K562 (cell line): ENCODE measurements at regions of chr2 and their contacts with region 1.

Region 1: DNA sequence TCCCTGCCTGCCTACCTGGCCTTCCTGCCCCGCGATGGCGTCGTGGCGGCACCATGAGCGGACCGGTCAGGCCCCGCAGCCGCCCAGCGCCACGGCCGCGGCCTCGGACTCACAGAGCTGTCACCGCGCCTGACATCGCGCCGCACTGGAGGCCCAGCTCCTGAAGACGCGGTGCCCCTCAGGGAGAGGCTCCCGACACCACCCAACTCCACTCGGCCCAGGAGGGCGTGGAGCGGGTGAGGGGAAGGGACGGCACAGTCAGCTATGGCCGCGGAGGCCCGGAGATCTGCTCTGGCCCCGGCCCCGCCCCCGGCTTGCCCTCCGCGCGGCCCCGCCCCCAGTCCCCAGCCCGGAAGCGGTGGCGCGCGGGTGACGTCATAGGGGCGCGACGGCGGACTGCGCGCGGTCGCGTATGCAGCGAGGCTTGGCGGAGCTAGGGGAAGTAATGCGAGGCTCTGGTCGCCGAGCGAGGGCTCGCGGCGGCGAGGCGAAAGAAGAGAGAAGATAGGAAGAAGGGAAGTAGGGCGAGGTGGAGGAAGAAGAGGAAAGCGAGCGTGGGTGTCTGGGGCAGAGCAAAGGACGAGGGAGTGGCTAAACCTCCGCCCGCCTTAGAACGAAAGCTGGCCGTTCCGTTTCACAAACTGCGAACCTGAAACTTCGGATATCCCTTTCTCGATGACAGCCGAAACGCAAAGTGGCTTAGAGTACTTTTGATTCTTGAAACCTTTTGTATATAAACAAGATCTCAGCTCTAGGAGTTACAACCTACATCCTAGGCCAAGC is at the start of gene SLC35F5:
- DNase-seq: peak; percentile 91 to 95 (median 94)
- ATAC-seq: peak; percentile 98
- H3K4me3 ChIP-seq: peak within 1 kb of the TSS; percentile 96
- H3K27ac ChIP-seq: peak within 1 kb of the TSS; percentile 97
- H3K4me1 ChIP-seq: peaks cover 3 to 18% of the 10 kb centered on the region in 2 experiments; a peak in 2 of 5 replicates
- H3K27me3 ChIP-seq: no peaks in the 10 kb centered on the region
- CTCF ChIP-seq: no peak
- EP300 ChIP-seq: no peak
- POLR2A ChIP-seq: peak; percentile 98
- RAD21 ChIP-seq: no peak; a peak in 2 of 4 replicates
- polyA plus RNA-seq, gene SLC35F5: 4.9 to 7.4 TPM

Region 2: DNA sequence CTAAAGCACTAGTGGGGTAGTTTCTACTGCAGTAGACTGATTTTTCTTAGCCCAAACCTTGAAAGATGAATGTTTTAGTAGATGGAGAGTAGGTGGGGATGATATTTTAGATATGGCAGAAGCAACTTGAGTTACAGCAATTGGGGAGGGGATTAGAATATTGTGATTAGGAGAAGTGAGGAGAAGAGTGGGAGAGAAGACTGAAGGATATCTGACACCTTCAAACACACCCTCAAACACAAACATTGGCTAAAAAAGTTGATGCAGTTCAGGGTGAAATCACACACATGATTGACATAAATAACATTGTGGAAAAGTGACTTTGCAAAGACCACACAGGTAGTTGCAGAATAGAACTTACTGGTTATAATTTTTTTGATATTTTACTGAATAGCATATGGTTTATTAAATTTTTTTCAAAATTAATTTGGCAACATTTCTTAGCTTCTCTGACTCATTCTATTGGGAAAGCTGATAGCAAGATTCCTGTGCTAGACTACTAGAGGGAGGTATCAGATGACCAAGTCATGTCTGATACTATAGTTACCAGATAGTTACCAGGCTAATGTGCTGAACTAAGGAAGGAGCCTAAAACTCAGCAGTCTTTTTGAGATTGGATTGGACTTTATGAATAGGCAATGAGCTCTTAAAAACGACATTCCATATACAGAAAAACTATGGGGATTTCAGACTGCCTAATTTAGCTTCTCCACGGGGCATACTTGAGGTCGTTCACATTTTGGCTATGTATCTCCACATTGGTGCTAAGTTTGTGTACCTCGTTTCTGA is 206.3 kb after region 1 on chr2:
- CTCF ChIA-PET with region 1: no interaction called
- POLR2A ChIA-PET with region 1: no interaction called
- in situ Hi-C with region 1: no loop called
- intact Hi-C with region 1: loop called (anchors 10 kb)
- DNase-seq: no peak
- ATAC-seq: peak; percentile 32; the same call in 2 of the 3 replicates
- H3K4me3 ChIP-seq: no peak overlapping the region
- H3K27ac ChIP-seq: no peak overlapping the region
- H3K4me1 ChIP-seq: no peaks in the 10 kb centered on the region
- H3K27me3 ChIP-seq: no peaks in the 10 kb centered on the region
- CTCF ChIP-seq: no peak
- EP300 ChIP-seq: no peak
- POLR2A ChIP-seq: peak; percentile 60
- RAD21 ChIP-seq: no peak

Region 3: DNA sequence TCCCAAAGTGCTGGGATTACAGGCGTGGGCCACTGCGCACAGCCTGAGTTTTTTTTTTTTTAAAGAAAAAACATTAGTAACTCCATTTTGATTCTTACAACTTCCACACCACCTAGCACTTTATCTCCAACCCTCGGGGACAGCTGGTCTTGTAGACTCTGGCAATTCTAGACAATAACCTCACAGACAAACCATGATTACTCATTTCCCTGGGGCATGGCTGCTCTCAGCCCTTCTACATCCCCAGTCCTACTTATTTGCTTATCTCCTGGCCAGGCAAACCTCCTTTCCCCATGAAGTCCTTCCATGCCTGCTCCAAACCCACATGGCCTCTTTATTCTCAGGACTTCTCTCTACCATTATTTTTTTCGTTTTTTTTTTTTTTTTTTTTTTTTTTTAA is 224.4 kb after region 1 on chr2:
- CTCF ChIA-PET with region 1: no interaction called
- POLR2A ChIA-PET with region 1: no interaction called
- in situ Hi-C with region 1: no loop called
- intact Hi-C with region 1: no loop called
- DNase-seq: no peak
- ATAC-seq: no peak
- H3K4me3 ChIP-seq: no peak overlapping the region
- H3K27ac ChIP-seq: no peak overlapping the region
- H3K4me1 ChIP-seq: no peaks in the 10 kb centered on the region
- H3K27me3 ChIP-seq: no peaks in the 10 kb centered on the region
- CTCF ChIP-seq: no peak
- EP300 ChIP-seq: no peak
- POLR2A ChIP-seq: no peak
- RAD21 ChIP-seq: no peak